ENCODE measurements at regions of chr11 and their contacts with region 1.

Region 1: DNA sequence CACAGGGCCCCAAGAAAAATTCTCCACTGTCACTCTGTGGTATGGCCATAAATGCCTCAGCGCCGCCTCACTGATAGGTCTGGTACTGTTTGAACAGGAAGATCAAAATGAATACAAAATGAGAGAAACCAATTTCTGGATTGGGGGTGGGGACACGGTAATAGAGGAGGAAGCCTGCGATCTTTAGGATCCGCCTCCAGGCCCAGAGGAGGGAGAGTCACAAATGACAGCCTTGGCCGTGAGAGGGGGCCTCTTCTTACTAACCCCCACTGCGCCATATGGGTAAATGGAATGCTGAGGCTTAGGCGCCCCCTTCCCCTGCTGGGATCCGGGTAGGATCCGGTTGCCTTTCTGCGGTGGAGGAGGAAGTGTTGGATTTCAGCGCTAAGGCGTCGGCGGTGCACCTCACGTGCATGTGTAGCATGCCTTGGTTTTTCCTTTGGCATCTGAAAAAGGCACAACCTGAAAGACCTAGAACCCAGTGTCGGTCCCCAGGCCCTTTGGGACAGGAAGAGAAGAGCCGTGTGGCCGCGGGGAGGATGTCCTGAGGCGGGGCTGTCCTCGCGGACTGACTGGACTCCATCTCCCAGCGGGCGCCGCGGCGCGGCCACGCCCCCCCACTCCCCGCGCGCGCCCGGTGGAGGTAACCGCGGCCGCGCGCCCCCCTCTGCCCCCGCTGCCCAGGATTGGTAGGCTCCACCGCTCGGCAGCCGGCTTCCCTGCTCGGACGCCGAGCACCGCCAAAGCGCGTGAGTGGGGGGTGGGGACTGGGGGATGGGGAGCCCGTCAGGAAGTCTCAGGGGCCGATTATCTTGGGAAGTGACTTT is 718 bp upstream of the MADD start:
- DNase-seq: peak; percentile 91 to 96
- H3K4me3 ChIP-seq: peak overlapping the region; percentile 79 to 97 (median 82)
- H3K27ac ChIP-seq: peak overlapping the region; percentile 96 to 99 (median 97)
- H3K4me1 ChIP-seq: peaks cover 46 to 64% (median 53%) of the 10 kb centered on the region in 4 donors
- H3K27me3 ChIP-seq: no peaks in the 10 kb centered on the region
- CTCF ChIP-seq: peak in 2 of 7 experiments; percentile 25 to 26
- EP300 ChIP-seq: peak; percentile 27
- POLR2A ChIP-seq: no peak

Region 2: DNA sequence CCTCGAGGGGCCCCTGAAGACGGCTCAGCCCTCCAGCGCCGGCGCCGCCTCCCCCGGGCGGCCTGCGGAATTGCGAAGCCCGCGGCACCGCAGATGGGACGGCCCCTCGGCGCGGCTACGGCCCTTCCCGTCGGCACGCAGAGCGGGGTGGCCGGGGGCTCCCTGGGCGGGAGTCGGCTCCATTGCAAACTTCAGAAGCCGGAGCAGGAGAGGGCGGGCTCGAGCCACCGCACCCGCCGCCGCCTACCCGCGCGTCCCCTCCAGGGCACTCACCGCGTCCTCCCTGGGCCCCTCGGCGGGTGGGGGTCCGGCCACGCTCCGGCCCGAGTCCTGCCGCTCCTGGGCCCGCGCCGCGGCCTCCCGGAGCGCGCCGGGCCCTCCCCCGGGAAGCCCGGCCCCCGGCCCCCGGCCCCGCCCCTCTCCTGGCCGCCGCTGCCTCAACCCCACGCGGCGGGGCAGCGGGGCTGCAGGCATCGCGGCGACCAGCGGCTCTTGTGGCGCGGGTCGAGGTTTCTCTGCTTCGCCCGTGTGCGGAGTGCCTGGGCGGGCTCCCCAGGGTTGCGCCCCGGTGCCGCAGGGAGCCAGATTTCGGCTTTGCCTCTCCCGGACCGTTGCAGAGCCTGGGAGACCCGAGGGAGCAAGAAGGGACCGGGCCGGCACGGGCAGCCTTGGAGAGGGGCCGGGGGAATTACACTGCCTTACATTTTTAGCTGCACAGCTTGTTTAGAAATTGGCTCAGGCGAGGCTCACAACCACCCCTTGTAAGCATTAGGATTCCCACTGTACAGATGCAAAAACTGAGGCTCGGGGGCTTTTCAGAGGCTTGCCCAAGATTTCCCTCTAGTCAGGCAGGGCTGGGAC is 82.9 kb before region 1 on chr11 and contains the start of gene PACSIN3:
- intact Hi-C with region 1: loop called (anchors 10 kb)
- DNase-seq: peak; percentile 69 to 83
- H3K4me3 ChIP-seq: peak within 1 kb of the TSS; percentile 78 to 90 (median 82)
- H3K27ac ChIP-seq: peak within 1 kb of the TSS; percentile 83 to 97 (median 90)
- H3K4me1 ChIP-seq: peaks cover 39 to 72% (median 57%) of the 10 kb centered on the region in 4 donors
- H3K27me3 ChIP-seq: peaks cover 0 to 34% (median 5%) of the 10 kb centered on the region in 3 donors
- CTCF ChIP-seq: peak in 3 of 7 experiments; percentile 8 to 16 (median 13)
- EP300 ChIP-seq: no peak
- POLR2A ChIP-seq: no peak
- total RNA-seq, gene PACSIN3: 6.4 to 38.4 (median 21.3) TPM

Region 3: DNA sequence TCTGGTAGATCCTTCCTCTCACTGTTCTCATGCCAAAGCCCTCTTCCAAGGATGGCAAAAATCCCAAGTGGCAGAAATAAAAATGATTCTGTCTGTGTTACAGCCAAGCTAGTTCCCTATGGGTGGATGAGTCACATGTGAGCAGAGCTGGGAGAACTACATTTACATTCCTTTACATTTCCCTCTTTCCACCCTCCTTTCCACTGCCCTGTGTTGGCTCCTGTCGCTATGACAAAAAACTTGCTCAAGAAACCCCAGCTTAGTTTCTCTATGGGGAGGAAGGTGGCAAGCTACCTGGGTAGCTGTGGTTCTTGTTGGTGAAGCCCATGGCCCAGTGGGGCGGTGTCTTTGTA is 64.6 kb before region 1 on chr11:
- intact Hi-C with region 1: no loop called
- DNase-seq: peak in 1 of 2 donors; percentile 47
- H3K4me3 ChIP-seq: no peak overlapping the region
- H3K27ac ChIP-seq: peak overlapping the region in 1 of 5 donors; percentile 46
- H3K4me1 ChIP-seq: peaks cover 0 to 8% (median 0%) of the 10 kb centered on the region in 4 donors
- H3K27me3 ChIP-seq: no peaks in the 10 kb centered on the region
- CTCF ChIP-seq: no peak
- EP300 ChIP-seq: no peak
- POLR2A ChIP-seq: no peak